Psoas muscle (tissue), 8 donors: ENCODE measurements at regions of chr20 and their contacts with region 1.

Region 1: DNA sequence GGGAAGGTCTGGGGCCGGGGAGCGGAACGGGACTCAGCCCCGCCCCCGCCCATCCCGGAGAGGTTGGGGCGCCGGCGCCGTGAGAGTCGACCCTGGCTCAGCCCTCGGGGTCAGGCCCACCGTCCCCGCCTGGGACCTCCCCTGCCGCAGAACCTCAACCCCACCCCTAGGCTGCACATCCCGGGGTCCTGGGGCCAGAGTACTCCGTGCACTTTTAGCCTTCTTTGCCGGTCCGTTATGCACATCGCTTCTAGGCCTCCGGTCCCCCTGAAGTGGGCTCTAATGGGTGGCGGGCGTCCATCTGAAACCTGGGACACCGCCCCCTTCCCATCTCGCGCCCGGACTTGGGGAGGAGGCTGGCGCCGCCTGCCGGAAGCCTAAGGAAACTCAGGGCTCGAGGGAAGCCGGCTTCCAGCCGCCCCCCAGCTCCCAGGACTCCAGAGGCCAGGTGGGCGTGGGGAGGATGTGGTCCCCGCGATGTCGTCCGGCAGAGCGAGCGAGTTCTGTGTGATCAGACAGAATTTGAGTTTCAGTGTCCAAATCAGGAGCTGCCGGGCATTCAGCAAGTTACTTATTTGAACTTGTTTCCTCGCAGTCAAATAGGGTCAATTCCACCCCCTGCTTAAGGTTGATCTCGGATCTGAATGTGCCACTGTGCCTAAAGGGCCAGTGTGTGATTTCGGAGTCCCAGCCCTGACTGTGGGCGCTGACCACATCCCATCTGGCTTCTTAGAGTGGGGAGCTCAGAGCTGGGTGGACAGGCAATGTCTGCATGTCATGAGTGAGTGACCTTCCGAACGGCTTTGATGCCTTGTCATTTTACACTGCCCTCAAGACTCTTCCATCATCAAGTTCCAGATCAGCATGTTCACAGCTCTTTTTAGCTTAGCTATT is 47.6 kb downstream of the CPXM1 start:
- DNase-seq: no peak
- ATAC-seq: no peak
- H3K4me3 ChIP-seq: peak overlapping the region; percentile 55
- H3K27ac ChIP-seq: no peak overlapping the region
- H3K4me1 ChIP-seq: peaks cover 6% of the 10 kb centered on the region
- H3K27me3 ChIP-seq: peaks cover 0 to 90% (median 40%) of the 10 kb centered on the region in 3 donors
- CTCF ChIP-seq: peak; percentile 45

Region 2: DNA sequence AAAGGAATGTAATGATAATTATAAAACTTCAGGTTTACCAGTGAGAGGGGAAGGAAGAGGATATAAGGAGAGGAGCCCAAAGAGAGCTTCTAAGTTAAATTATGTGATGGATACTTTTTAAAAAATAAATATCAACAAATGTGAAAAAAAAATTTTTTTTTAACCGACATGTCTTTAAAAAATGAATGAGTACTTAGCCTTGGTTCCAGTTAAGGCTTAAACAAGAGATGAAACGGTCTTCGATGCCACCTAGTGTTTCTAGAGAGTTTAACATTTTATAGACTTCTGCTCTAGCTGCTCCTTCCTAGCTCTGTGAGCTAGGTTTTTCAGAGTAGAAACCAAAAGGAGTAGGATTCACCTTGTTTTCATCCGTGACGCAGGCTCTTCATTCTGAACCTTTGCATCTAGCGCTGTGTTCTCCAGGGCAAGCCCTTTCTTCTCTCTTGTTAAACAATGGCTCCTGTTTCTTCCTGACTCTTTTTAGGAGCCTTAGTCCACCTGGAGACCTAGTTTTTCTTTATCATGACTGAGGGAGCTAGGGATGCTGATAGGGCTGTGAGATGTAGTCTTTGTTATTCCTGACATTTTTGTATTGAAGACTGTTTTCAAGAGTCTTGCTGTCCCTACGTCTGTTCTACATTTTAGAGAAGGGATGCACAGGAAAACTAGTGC is 248.2 kb after region 1 on chr20:
- intact Hi-C with region 1: loop called in 1 of 2 experiments (anchors 10 kb)
- DNase-seq: no peak
- ATAC-seq: peak in 3 of 4 donors; percentile 57 to 91 (median 81)
- H3K4me3 ChIP-seq: no peak overlapping the region
- H3K27ac ChIP-seq: no peak overlapping the region
- H3K4me1 ChIP-seq: no peaks in the 10 kb centered on the region
- H3K27me3 ChIP-seq: no peaks in the 10 kb centered on the region
- CTCF ChIP-seq: peak; percentile 67